ENCODE measurements at regions of chr18 and their contacts with region 1.

Region 1: DNA sequence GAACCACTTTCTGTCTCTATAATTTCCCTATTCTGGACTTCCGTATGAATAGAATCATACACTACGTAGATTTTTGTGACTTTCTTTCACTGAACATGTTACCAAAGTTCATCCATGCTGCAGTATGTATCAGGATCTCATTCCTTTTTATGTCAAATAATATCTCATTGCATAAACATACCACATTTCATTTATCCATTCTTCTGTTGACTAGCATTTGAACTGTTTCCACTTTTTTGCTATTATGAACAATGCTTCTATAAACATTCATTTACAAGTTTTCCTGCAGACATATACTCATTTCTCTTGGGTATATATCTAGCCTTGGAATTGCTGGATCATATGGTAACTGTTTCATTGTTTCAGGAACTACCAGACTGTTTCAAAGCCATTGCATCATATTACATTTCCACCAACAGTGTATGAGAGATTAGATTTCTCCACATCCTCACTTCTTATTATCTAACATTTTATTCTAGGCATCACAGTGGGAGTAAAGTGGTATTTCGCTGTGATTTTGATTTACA is 186.2 kb downstream of the DYM start:
- DNase-seq: no peak
- ATAC-seq: no peak
- H3K4me3 ChIP-seq: no peak overlapping the region
- H3K4me3 Mint-ChIP-seq: no peak overlapping the region
- H3K27ac ChIP-seq: no peak overlapping the region
- H3K27ac Mint-ChIP-seq: no peak overlapping the region
- H3K4me1 ChIP-seq: no peaks in the 10 kb centered on the region
- H3K4me1 Mint-ChIP-seq: peaks cover 0 to 8% (median 0%) of the 10 kb centered on the region in 7 donors
- H3K27me3 ChIP-seq: no peaks in the 10 kb centered on the region
- H3K27me3 Mint-ChIP-seq: no peaks in the 10 kb centered on the region

Region 2: DNA sequence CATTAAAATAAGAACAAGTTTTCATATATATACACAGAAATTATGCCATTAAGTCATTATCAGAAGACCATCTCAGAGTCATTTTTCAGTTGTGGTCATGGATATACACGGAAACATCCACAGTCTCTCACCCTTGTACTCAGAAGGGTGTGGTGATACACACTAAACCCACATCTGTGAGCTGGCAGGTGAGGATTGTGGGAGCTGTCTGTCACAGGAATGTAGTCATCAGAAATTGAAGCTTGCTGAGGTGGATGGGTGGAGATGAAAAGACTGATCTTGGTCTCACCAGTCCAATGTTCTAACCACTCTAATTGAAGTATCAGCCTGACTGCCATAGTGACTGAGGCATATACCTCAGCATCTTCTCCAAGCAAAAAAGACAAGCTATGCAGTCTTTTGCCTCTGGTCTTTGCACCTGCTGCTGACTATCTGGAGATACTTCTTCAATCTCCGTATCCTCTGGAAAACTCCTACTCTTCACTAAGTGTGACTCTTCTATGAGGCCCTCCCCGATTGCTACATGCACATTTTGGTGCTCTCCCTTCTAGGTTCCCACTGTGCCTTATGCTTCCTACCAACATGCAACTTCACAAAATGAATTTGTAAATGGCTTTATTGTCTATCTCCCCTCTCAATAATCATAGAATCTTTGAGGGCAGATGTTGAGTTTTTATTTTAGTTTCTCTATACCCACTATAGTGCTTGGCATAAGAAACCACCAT is 46.6 kb before region 1 on chr18:
- CTCF ChIA-PET with region 1: no interaction called
- POLR2A ChIA-PET with region 1: no interaction called
- intact Hi-C with region 1: loop called in 1 of 2 experiments (anchors 5 kb)
- DNase-seq: peak in 6 of 9 donors; percentile 12 to 35 (median 26)
- ATAC-seq: peak; percentile 80
- H3K4me3 ChIP-seq: no peak overlapping the region
- H3K4me3 Mint-ChIP-seq: peak overlapping the region in 4 of 10 donors; percentile 26 to 31 (median 28)
- H3K27ac ChIP-seq: no peak overlapping the region
- H3K27ac Mint-ChIP-seq: peak overlapping the region in 5 of 9 donors; percentile 7 to 60 (median 16)
- H3K4me1 ChIP-seq: peaks cover 5 to 9% of the 10 kb centered on the region in 2 donors
- H3K4me1 Mint-ChIP-seq: peaks cover 23 to 36% (median 31%) of the 10 kb centered on the region in 7 donors
- H3K27me3 ChIP-seq: no peaks in the 10 kb centered on the region
- H3K27me3 Mint-ChIP-seq: no peaks in the 10 kb centered on the region

Region 3: GRCh38 chr18:49486953-49487710 is 212.9 kb after region 1 on chr18 and contains the start of gene C18orf32:
- CTCF ChIA-PET with region 1: no interaction called
- POLR2A ChIA-PET with region 1: no interaction called
- intact Hi-C with region 1: no loop called
- DNase-seq: peak; percentile 84 to 93 (median 92)
- ATAC-seq: peak; percentile 94
- H3K4me3 ChIP-seq: peak within 1 kb of the TSS; percentile 95
- H3K4me3 Mint-ChIP-seq: peak within 1 kb of the TSS; percentile 77 to 98 (median 94)
- H3K27ac ChIP-seq: peak within 1 kb of the TSS; percentile 95
- H3K27ac Mint-ChIP-seq: peak within 1 kb of the TSS; percentile 90 to 98 (median 96)
- H3K4me1 ChIP-seq: peaks cover 34 to 39% of the 10 kb centered on the region in 2 donors
- H3K4me1 Mint-ChIP-seq: peaks cover 40 to 83% (median 70%) of the 10 kb centered on the region in 7 donors
- H3K27me3 ChIP-seq: no peaks in the 10 kb centered on the region
- H3K27me3 Mint-ChIP-seq: no peaks in the 10 kb centered on the region
- total RNA-seq, gene C18orf32: 22.5 to 53.6 (median 31.5) TPM